A673 (cell line): ENCODE measurements at regions of chr2 and their contacts with region 1.

Region 1: DNA sequence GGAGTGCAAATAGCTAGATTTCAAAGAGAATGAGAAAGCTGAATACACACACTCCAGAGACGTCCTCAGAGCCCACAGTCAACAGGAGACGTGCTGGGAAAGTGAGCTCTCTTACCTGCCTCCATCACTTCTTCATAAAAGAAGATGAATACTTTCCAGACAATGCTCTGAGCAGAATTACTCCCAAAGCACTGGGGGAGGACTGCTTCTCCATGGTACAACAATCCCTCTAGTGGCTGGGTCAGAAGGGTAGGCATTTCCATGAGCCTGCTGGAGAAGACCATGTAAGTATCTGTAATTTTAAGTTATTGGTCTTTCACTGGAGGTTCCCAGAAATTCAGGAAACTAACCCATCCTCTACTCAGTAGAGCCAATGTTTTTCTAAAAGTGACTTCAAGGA is 190.3 kb downstream of the RBM43 start:
- DNase-seq: peak; percentile 59
- H3K4me3 ChIP-seq: no peak overlapping the region
- H3K27ac ChIP-seq: no peak overlapping the region
- H3K4me1 ChIP-seq: no peaks in the 10 kb centered on the region
- H3K27me3 ChIP-seq: no peaks in the 10 kb centered on the region
- CTCF ChIP-seq: peak; percentile 46

Region 2: DNA sequence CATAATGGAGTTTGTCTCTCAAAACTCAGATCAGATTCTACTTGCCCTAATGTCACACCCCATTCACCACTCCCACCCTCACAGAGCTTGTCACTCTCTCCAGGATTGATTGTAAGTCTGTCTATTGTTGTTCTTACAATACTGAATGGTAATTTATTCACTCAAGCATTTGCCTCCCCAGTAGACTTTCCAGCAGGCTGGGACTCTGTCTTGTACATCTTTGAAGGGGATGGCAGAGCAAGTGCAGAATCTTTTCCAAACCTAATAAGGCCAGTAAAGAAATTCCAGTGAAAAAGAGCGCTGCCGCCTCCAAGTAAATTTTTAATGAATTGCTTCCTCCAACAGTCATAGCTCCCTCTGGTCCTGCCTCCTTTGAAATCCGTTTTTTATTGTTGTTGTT is 133.4 kb after region 1 on chr2:
- CTCF ChIA-PET with region 1: interaction called, 11 read pairs
- POLR2A ChIA-PET with region 1: no interaction called
- intact Hi-C with region 1: no loop called
- DNase-seq: no peak
- H3K4me3 ChIP-seq: no peak overlapping the region
- H3K27ac ChIP-seq: no peak overlapping the region
- H3K4me1 ChIP-seq: peaks cover 13% of the 10 kb centered on the region
- H3K27me3 ChIP-seq: no peaks in the 10 kb centered on the region
- CTCF ChIP-seq: no peak